ENCODE measurements at regions of chr6 and their contacts with region 1.

Region 1: DNA sequence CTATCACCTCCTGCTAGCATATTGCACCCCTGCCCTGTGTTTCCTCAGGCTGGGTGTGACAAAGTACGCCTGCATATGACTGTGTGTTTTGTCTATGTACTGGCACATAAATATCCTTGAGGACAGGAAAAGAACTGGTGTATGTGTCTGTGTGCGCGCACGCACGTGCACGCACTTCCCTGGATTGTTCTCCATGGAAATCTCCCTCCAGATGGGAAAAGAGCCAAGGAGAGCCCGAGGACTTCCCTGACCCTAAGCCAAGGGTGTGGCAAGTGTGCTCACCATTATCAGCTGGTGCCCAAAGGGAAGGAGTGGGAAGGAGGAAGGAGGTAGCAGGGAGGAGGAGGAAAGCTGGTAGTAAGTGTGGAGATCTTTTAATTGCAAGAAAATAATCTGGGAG is 117.6 kb downstream of the HIVEP2 start:
- DNase-seq: no peak
- ATAC-seq: no peak
- H3K4me3 ChIP-seq: no peak overlapping the region
- H3K27ac ChIP-seq: no peak overlapping the region
- H3K4me1 ChIP-seq: peaks cover 10% of the 10 kb centered on the region
- H3K27me3 ChIP-seq: no peaks in the 10 kb centered on the region
- CTCF ChIP-seq: no peak
- EP300 ChIP-seq: no peak
- POLR2A ChIP-seq: no peak
- RAD21 ChIP-seq: no peak

Region 2: DNA sequence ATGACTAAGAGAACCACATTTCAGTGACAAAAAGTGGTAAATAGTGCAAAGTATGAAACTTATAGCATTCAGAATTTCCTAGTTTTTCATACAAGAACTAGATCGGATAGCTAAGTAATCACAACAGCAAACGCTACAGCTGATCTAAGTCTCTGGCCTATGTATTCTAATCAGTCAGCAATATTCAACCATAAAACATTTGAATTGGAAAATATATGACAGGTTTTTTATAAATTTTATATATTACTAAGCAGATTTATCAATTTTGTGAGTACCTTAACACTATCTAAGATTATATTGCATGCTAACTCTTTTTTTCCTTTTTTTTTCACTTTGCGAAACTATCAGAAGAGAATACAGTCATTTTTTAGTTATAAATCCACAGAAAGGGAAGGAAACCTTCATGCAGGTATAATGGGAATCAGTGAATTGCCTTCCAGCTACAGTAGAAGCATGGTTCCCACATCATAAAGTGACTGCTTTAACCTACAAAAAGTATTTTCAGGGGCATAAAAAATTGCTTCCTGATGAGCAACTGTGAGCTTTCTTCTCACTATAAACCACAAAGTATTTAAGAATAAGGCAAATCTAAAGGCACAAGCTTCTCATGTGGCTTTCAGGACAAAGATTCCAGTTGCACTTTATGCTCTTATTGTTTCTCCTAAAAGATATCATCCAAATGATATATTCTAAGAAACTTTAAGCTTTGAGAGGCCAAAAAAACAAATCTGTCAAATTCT is 768.6 kb before region 1 on chr6:
- CTCF ChIA-PET with region 1: no interaction called
- POLR2A ChIA-PET with region 1: no interaction called
- RAD21 ChIA-PET with region 1: no interaction called
- SMC1A ChIA-PET with region 1: no interaction called
- in situ Hi-C with region 1: no loop called
- intact Hi-C with region 1: no loop called
- DNase-seq: no peak
- ATAC-seq: no peak
- H3K4me3 ChIP-seq: no peak overlapping the region
- H3K27ac ChIP-seq: no peak overlapping the region
- H3K4me1 ChIP-seq: no peaks in the 10 kb centered on the region
- H3K27me3 ChIP-seq: no peaks in the 10 kb centered on the region
- CTCF ChIP-seq: no peak
- EP300 ChIP-seq: no peak
- POLR2A ChIP-seq: no peak
- RAD21 ChIP-seq: no peak

Region 3: DNA sequence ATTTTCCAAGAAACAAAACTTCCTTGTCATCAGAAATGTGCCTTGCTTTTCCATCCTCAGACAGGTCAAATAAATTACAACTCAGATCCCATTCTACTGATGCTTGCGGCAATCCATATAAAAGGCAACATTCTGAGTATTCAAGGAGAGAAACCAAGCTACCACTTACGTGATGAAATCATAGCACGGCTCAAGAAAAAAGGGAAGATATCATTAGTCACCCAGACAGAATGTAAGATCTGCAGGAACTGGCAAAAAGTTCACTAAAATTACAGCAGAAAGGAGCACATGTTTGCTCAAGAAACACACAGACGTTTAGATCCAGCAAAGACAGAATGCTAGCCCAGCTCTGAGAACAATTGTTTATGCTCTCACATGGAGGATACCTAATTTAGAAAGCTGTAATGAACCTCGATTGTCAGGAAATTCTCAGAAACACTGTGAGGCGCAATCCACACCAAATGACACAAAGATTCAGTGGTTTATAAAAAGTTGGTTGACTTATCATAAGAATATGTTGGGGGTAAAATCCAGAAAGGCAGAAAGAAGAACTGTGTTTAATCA is 221.4 kb before region 1 on chr6:
- CTCF ChIA-PET with region 1: no interaction called
- POLR2A ChIA-PET with region 1: no interaction called
- RAD21 ChIA-PET with region 1: no interaction called
- SMC1A ChIA-PET with region 1: no interaction called
- in situ Hi-C with region 1: no loop called
- intact Hi-C with region 1: no loop called
- DNase-seq: no peak
- ATAC-seq: no peak
- H3K4me3 ChIP-seq: no peak overlapping the region
- H3K27ac ChIP-seq: no peak overlapping the region
- H3K4me1 ChIP-seq: no peaks in the 10 kb centered on the region
- H3K27me3 ChIP-seq: no peaks in the 10 kb centered on the region
- CTCF ChIP-seq: no peak
- EP300 ChIP-seq: no peak
- POLR2A ChIP-seq: no peak
- RAD21 ChIP-seq: no peak

Region 4: GRCh38 chr6:142617158-142617557 is 210.2 kb before region 1 on chr6:
- CTCF ChIA-PET with region 1: no interaction called
- POLR2A ChIA-PET with region 1: no interaction called
- RAD21 ChIA-PET with region 1: no interaction called
- SMC1A ChIA-PET with region 1: no interaction called
- in situ Hi-C with region 1: no loop called
- intact Hi-C with region 1: no loop called
- DNase-seq: no peak
- ATAC-seq: no peak
- H3K4me3 ChIP-seq: no peak overlapping the region
- H3K27ac ChIP-seq: no peak overlapping the region
- H3K4me1 ChIP-seq: no peaks in the 10 kb centered on the region
- H3K27me3 ChIP-seq: no peaks in the 10 kb centered on the region; a peak in 1 of 4 replicates
- CTCF ChIP-seq: no peak
- EP300 ChIP-seq: no peak
- POLR2A ChIP-seq: no peak
- RAD21 ChIP-seq: no peak

Region 5: GRCh38 chr6:142648036-142648451 is 179.3 kb before region 1 on chr6:
- CTCF ChIA-PET with region 1: no interaction called
- POLR2A ChIA-PET with region 1: no interaction called
- RAD21 ChIA-PET with region 1: no interaction called
- SMC1A ChIA-PET with region 1: no interaction called
- in situ Hi-C with region 1: no loop called
- intact Hi-C with region 1: no loop called
- DNase-seq: no peak
- ATAC-seq: peak; percentile 16; the same call in 1 of the 3 replicates
- H3K4me3 ChIP-seq: no peak overlapping the region
- H3K27ac ChIP-seq: no peak overlapping the region
- H3K4me1 ChIP-seq: no peaks in the 10 kb centered on the region
- H3K27me3 ChIP-seq: no peaks in the 10 kb centered on the region; a peak in 2 of 4 replicates
- CTCF ChIP-seq: no peak
- EP300 ChIP-seq: no peak
- POLR2A ChIP-seq: no peak
- RAD21 ChIP-seq: no peak

Region 6: GRCh38 chr6:142838821-142839685 is 11.7 kb after region 1 on chr6:
- CTCF ChIA-PET with region 1: interaction called, 108 read pairs
- POLR2A ChIA-PET with region 1: interaction called, 67 read pairs
- RAD21 ChIA-PET with region 1: interaction called, 374 read pairs
- SMC1A ChIA-PET with region 1: interaction called, 449 read pairs
- in situ Hi-C with region 1: no loop called
- intact Hi-C with region 1: loop called (anchors 1 kb)
- DNase-seq: no peak
- ATAC-seq: peak; percentile 45
- H3K4me3 ChIP-seq: no peak overlapping the region
- H3K27ac ChIP-seq: peak overlapping the region; percentile 71
- H3K4me1 ChIP-seq: peaks cover 42% of the 10 kb centered on the region
- H3K27me3 ChIP-seq: no peaks in the 10 kb centered on the region
- CTCF ChIP-seq: no peak
- EP300 ChIP-seq: peak; percentile 9 to 65; a peak in 2 of 4 replicates
- POLR2A ChIP-seq: no peak
- RAD21 ChIP-seq: no peak

Measured in GM12878 (cell line).